ENCODE measurements at regions of chr17 and their contacts with region 1.

Region 1: DNA sequence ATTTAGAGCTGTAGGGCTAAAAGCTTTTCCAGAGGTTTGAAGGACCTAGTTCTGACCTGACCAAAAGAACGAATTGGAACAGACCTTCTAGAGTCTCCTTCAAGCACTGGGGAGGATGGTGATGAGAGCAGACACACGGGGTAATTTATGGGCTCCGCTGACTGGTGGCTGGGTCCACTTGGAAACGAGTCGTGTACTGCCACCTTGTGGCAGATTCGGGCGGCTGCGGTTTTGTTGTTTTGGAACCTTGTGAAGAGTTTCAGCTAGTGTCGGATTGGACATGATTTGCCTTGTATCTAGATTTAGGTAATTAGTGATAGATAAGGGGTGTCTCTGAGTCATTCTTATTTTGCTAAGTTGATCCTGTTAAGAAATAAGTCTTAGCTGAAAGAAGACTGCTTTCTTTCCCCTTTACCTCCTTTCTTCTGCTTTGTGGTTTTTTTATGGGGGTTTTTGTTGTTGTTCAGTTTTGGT is 98.9 kb downstream of the AATF start:
- DNase-seq: peak; percentile 81
- H3K4me3 Mint-ChIP-seq: no peak overlapping the region
- H3K27ac Mint-ChIP-seq: no peak overlapping the region
- H3K4me1 Mint-ChIP-seq: peaks cover 7% of the 10 kb centered on the region
- H3K27me3 Mint-ChIP-seq: no peaks in the 10 kb centered on the region
- CTCF ChIP-seq: peak; percentile 70

Region 2: GRCh38 chr17:36601303-36602029 is 446.2 kb before region 1 on chr17 and contains the start of gene MRM1:
- CTCF ChIA-PET with region 1: interaction called, 30 read pairs
- POLR2A ChIA-PET with region 1: interaction called, 17 read pairs
- intact Hi-C with region 1: loop called (anchors 2 kb)
- DNase-seq: peak; percentile 92
- H3K4me3 Mint-ChIP-seq: peak within 1 kb of the TSS; percentile 93
- H3K27ac Mint-ChIP-seq: peak within 1 kb of the TSS; percentile 85
- H3K4me1 Mint-ChIP-seq: peaks cover 24% of the 10 kb centered on the region
- H3K27me3 Mint-ChIP-seq: no peaks in the 10 kb centered on the region
- CTCF ChIP-seq: no peak
- total RNA-seq, gene MRM1: 5.7 and 10.0 TPM in 2 replicates

Region 3: GRCh38 chr17:36640836-36641235 is 406.8 kb before region 1 on chr17:
- CTCF ChIA-PET with region 1: interaction called, 16 read pairs
- POLR2A ChIA-PET with region 1: no interaction called
- intact Hi-C with region 1: no loop called
- DNase-seq: no peak
- H3K4me3 Mint-ChIP-seq: no peak overlapping the region
- H3K27ac Mint-ChIP-seq: no peak overlapping the region
- H3K4me1 Mint-ChIP-seq: no peaks in the 10 kb centered on the region
- H3K27me3 Mint-ChIP-seq: peaks cover 97% of the 10 kb centered on the region
- CTCF ChIP-seq: no peak

Region 4: GRCh38 chr17:37019117-37019740 is 28.4 kb before region 1 on chr17:
- CTCF ChIA-PET with region 1: interaction called, 17 read pairs
- POLR2A ChIA-PET with region 1: no interaction called
- intact Hi-C with region 1: no loop called
- DNase-seq: no peak
- H3K4me3 Mint-ChIP-seq: no peak overlapping the region
- H3K27ac Mint-ChIP-seq: no peak overlapping the region
- H3K4me1 Mint-ChIP-seq: no peaks in the 10 kb centered on the region
- H3K27me3 Mint-ChIP-seq: no peaks in the 10 kb centered on the region
- CTCF ChIP-seq: no peak

Region 5: GRCh38 chr17:37060928-37061327 is 13.3 kb after region 1 on chr17:
- CTCF ChIA-PET with region 1: interaction called, 42 read pairs
- POLR2A ChIA-PET with region 1: no interaction called
- intact Hi-C with region 1: no loop called
- DNase-seq: no peak
- H3K4me3 Mint-ChIP-seq: no peak overlapping the region
- H3K27ac Mint-ChIP-seq: no peak overlapping the region
- H3K4me1 Mint-ChIP-seq: no peaks in the 10 kb centered on the region
- H3K27me3 Mint-ChIP-seq: peaks cover 12% of the 10 kb centered on the region
- CTCF ChIP-seq: no peak